GM12878 (cell line): ENCODE measurements at regions of chr11 and their contacts with region 1.

Region 1: GRCh38 chr11:8263769-8264410 is at the start of gene LMO1:
- DNase-seq: no peak
- ATAC-seq: peak; percentile 87
- H3K4me3 ChIP-seq: peak within 1 kb of the TSS; percentile 50
- H3K27ac ChIP-seq: no peak within 1 kb of the TSS
- H3K4me1 ChIP-seq: no peaks in the 10 kb centered on the region
- H3K27me3 ChIP-seq: peaks cover 20 to 24% of the 10 kb centered on the region in 2 experiments
- CTCF ChIP-seq: peak; percentile 83 to 93 (median 92)
- EP300 ChIP-seq: no peak
- POLR2A ChIP-seq: no peak
- RAD21 ChIP-seq: peak; percentile 52
- polyA plus RNA-seq, gene LMO1: not detected

Region 2: GRCh38 chr11:8219257-8220021 is 44.5 kb before region 1 on chr11:
- CTCF ChIA-PET with region 1: interaction called, 14 read pairs
- POLR2A ChIA-PET with region 1: no interaction called
- RAD21 ChIA-PET with region 1: interaction called, 5 read pairs
- SMC1A ChIA-PET with region 1: interaction called, 5 read pairs
- in situ Hi-C with region 1: no loop called
- intact Hi-C with region 1: no loop called
- DNase-seq: no peak
- ATAC-seq: peak; percentile 90
- H3K4me3 ChIP-seq: no peak overlapping the region
- H3K27ac ChIP-seq: no peak overlapping the region
- H3K4me1 ChIP-seq: no peaks in the 10 kb centered on the region; the same call in 1 of the 2 replicates
- H3K27me3 ChIP-seq: no peaks in the 10 kb centered on the region
- CTCF ChIP-seq: peak; percentile 71 to 75 (median 71)
- EP300 ChIP-seq: no peak
- POLR2A ChIP-seq: no peak
- RAD21 ChIP-seq: peak; percentile 41

Region 3: GRCh38 chr11:8239536-8240228 is 24.2 kb before region 1 on chr11:
- CTCF ChIA-PET with region 1: interaction called, 14 read pairs
- POLR2A ChIA-PET with region 1: no interaction called
- RAD21 ChIA-PET with region 1: interaction called, 4 read pairs
- SMC1A ChIA-PET with region 1: interaction called, 3 read pairs
- in situ Hi-C with region 1: no loop called
- intact Hi-C with region 1: no loop called
- DNase-seq: no peak
- ATAC-seq: no peak
- H3K4me3 ChIP-seq: no peak overlapping the region
- H3K27ac ChIP-seq: no peak overlapping the region
- H3K4me1 ChIP-seq: no peaks in the 10 kb centered on the region
- H3K27me3 ChIP-seq: peaks cover 0 to 1% of the 10 kb centered on the region in 2 experiments; a peak in 1 of 4 replicates
- CTCF ChIP-seq: no peak
- EP300 ChIP-seq: no peak
- POLR2A ChIP-seq: no peak
- RAD21 ChIP-seq: no peak

Region 4: DNA sequence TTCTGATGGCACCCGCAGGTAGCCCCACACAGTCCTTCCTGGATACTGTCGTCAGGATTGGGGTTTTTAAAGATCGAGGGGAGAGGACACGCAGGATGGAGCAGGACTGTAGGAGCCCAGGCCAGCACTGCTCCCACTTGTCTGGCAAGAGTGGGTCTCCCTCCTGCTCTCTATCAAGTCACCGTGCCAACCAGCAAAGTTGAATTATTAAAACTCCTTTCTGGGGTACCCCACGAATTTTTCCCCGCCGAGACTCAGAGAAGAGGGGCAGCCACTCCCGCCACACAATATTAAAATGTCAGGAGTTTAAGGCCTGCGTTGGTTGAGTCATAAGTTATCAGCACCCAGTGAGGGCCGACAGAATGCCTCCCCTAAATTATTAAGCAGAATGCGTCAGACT is 10.3 kb before region 1 on chr11:
- CTCF ChIA-PET with region 1: interaction called, 15 read pairs
- POLR2A ChIA-PET with region 1: no interaction called
- RAD21 ChIA-PET with region 1: interaction called, 4 read pairs
- SMC1A ChIA-PET with region 1: interaction called, 3 read pairs
- in situ Hi-C with region 1: no loop called
- intact Hi-C with region 1: no loop called
- DNase-seq: no peak
- ATAC-seq: no peak
- H3K4me3 ChIP-seq: no peak overlapping the region
- H3K27ac ChIP-seq: no peak overlapping the region
- H3K4me1 ChIP-seq: no peaks in the 10 kb centered on the region
- H3K27me3 ChIP-seq: peaks cover 0 to 3% of the 10 kb centered on the region in 2 experiments; a peak in 2 of 4 replicates
- CTCF ChIP-seq: no peak
- EP300 ChIP-seq: no peak
- POLR2A ChIP-seq: no peak
- RAD21 ChIP-seq: no peak

Region 5: GRCh38 chr11:8415195-8415594 is 151.3 kb after region 1 on chr11:
- CTCF ChIA-PET with region 1: no interaction called
- POLR2A ChIA-PET with region 1: no interaction called
- RAD21 ChIA-PET with region 1: no interaction called
- SMC1A ChIA-PET with region 1: no interaction called
- in situ Hi-C with region 1: no loop called
- intact Hi-C with region 1: no loop called
- DNase-seq: no peak
- ATAC-seq: no peak
- H3K4me3 ChIP-seq: no peak overlapping the region
- H3K27ac ChIP-seq: no peak overlapping the region
- H3K4me1 ChIP-seq: no peaks in the 10 kb centered on the region
- H3K27me3 ChIP-seq: no peaks in the 10 kb centered on the region
- CTCF ChIP-seq: no peak
- EP300 ChIP-seq: no peak
- POLR2A ChIP-seq: no peak
- RAD21 ChIP-seq: no peak